IMR-90 (cell line): ENCODE measurements at regions of chr14 and their contacts with region 1.

Region 1: GRCh38 chr14:51657762-51658161 is 6.1 kb downstream of the FRMD6 start:
- DNase-seq: peak; percentile 61
- ATAC-seq: 0 out of 2 replicates have a peak, but pooled peaks have one; percentile 21
- H3K4me3 ChIP-seq: no peak overlapping the region
- H3K27ac ChIP-seq: peak overlapping the region; percentile 3; the same call in 1 of the 2 replicates
- H3K4me1 ChIP-seq: peaks cover 10% of the 10 kb centered on the region
- H3K27me3 ChIP-seq: no peaks in the 10 kb centered on the region
- CTCF ChIP-seq: no peak
- POLR2A ChIP-seq: no peak; the same call in 1 of the 2 replicates
- RAD21 ChIP-seq: no peak

Region 2: GRCh38 chr14:51293149-51293911 is 364.4 kb before region 1 on chr14:
- CTCF ChIA-PET with region 1: no interaction called
- POLR2A ChIA-PET with region 1: no interaction called
- dilution Hi-C with region 1: no loop called
- in situ Hi-C with region 1: loop called (anchors 5 kb)
- intact Hi-C with region 1: no loop called
- DNase-seq: peak; percentile 75
- ATAC-seq: peak; percentile 88
- H3K4me3 ChIP-seq: no peak overlapping the region
- H3K27ac ChIP-seq: peak overlapping the region; percentile 59
- H3K4me1 ChIP-seq: peaks cover 12% of the 10 kb centered on the region
- H3K27me3 ChIP-seq: no peaks in the 10 kb centered on the region
- CTCF ChIP-seq: no peak
- POLR2A ChIP-seq: no peak
- RAD21 ChIP-seq: no peak

Region 3: DNA sequence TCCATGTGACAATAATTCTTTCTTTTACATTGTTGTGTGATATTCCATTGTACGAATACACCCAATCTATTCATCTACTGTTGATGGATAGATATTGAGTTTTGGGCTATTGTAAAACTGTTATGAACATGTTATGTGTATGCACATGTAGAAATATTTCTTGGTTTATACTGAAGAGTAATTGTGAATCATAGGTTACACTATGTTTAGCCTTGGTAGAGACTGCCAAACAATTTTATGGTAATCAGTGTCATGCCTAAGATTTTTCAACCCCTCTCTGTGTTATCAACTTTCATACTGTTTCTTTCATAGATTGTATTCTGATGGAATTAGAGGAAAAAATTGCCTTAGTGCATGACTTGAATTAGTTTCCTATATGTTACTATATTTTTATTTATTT is 33.4 kb after region 1 on chr14:
- CTCF ChIA-PET with region 1: interaction called, 6 read pairs
- POLR2A ChIA-PET with region 1: no interaction called
- dilution Hi-C with region 1: no loop called
- in situ Hi-C with region 1: no loop called
- intact Hi-C with region 1: loop called (anchors 5 kb)
- DNase-seq: peak; percentile 72
- ATAC-seq: peak; percentile 73
- H3K4me3 ChIP-seq: no peak overlapping the region
- H3K27ac ChIP-seq: no peak overlapping the region
- H3K4me1 ChIP-seq: peaks cover 14% of the 10 kb centered on the region
- H3K27me3 ChIP-seq: no peaks in the 10 kb centered on the region
- CTCF ChIP-seq: no peak
- POLR2A ChIP-seq: no peak
- RAD21 ChIP-seq: no peak

Region 4: DNA sequence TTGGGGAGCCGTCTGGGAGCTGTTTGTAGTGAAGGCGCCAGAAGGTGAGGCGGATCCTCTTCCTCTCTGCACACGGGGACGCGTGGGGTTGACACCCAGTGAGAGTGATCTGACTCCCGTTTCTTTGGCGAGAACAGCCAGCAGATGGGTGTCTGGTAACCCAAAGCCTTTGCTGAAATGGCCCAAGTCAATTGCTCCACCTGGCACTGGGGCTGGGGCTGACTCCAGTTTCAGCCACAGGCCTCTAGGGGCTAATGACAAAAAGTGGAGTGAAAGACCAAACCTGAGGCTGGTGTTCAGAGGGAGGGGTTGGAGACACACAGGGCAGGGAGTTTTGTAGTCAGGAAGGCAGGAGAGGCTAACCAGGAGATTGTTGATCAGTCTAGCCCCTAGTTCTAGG is 81.0 kb after region 1 on chr14:
- CTCF ChIA-PET with region 1: no interaction called
- POLR2A ChIA-PET with region 1: no interaction called
- dilution Hi-C with region 1: no loop called
- in situ Hi-C with region 1: no loop called
- intact Hi-C with region 1: no loop called
- DNase-seq: no peak
- ATAC-seq: no peak
- H3K4me3 ChIP-seq: no peak overlapping the region
- H3K27ac ChIP-seq: no peak overlapping the region
- H3K4me1 ChIP-seq: no peaks in the 10 kb centered on the region
- H3K27me3 ChIP-seq: no peaks in the 10 kb centered on the region; the same call in 1 of the 2 replicates
- CTCF ChIP-seq: no peak
- POLR2A ChIP-seq: no peak
- RAD21 ChIP-seq: no peak